ENCODE measurements at regions of chr14 and their contacts with region 1.

Region 1: GRCh38 chr14:61153431-61153830 is 127.7 kb downstream of the TMEM30B start:
- DNase-seq: no peak
- H3K4me3 Mint-ChIP-seq: no peak overlapping the region
- H3K27ac Mint-ChIP-seq: no peak overlapping the region
- H3K4me1 Mint-ChIP-seq: peaks cover 25% of the 10 kb centered on the region
- H3K27me3 Mint-ChIP-seq: no peaks in the 10 kb centered on the region
- CTCF ChIP-seq: no peak

Region 2: DNA sequence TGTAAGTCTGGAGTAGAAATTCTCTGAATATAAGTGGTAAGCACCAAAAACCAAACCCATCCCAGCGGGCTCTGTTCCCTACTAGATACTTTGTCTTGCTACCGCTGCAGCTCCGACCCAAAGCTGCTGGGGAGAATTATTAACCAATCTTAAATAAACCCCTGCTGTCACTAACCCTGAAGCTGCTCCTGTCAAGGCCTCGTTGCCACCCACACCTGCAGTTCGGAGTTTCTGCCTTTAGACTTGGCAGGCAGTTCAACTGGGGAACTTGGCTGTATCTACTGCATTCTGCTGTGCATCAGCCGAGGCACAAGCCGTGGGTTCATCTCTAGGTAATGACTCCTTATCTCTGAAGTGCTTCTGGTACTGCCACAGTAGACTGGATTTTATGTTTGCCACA is 848.9 kb before region 1 on chr14:
- CTCF ChIA-PET with region 1: interaction called, 13 read pairs
- intact Hi-C with region 1: no loop called
- DNase-seq: no peak
- H3K4me3 Mint-ChIP-seq: no peak overlapping the region
- H3K27ac Mint-ChIP-seq: no peak overlapping the region
- H3K4me1 Mint-ChIP-seq: peaks cover 5% of the 10 kb centered on the region
- H3K27me3 Mint-ChIP-seq: no peaks in the 10 kb centered on the region
- CTCF ChIP-seq: no peak

Measured in Calu3 (cell line).